CD8-positive, alpha-beta memory T cell (primary cell): ENCODE measurements at regions of chr12 and their contacts with region 1.

Region 1: DNA sequence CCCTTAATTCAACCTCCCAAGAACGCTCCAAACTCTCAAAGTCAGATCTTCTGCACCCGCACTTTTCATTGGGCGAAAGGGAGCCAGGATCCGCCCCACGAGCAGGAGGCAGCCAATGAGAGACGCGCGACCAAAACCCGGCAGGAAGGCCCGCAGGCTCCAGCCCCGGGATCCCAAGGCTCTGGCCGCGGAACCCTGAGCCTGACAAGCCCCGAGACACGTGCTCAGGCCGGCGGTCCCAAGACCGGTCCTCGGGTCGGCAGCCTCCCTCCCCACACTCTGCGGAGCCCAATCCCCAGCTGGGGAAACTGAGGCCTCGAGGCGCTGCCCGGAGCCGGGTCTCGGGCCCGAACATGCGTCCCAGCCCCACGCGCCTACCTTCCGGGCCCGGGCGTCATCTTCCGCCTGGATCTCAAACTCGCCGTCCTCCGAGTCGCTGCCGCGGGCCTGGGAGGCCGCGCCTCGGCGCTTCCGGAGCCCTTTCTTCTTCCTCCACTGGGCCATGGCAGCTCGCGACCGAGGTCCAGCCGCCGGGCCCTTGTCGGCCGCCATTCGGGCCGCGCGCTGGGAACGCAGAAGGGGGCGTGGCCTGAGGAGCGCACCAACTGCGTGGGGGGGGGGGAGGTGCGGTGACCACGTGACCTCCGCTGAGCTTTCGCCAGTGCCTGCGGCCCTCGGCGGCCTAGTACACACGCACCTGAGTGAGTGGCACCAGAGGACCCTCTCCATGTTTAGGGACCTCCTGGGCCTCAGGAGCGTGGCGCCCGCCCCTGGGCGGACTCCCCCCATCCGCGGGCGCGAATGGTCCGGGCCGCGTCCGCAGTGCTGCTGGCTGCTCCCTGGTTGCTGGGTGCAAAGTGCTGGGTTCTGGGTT is at the starts of genes DDX54 and RITA1:
- DNase-seq: peak; percentile 82 to 92 (median 89)
- H3K4me3 ChIP-seq: peak within 1 kb of the TSS; percentile 85
- H3K4me3 Mint-ChIP-seq: peak within 1 kb of the TSS; percentile 94 to 100 (median 96)
- H3K27ac ChIP-seq: peak within 1 kb of the TSS; percentile 89
- H3K27ac Mint-ChIP-seq: peak within 1 kb of the TSS; percentile 96 to 99 (median 97)
- H3K4me1 ChIP-seq: peaks cover 31% of the 10 kb centered on the region
- H3K4me1 Mint-ChIP-seq: peaks cover 28 to 51% (median 49%) of the 10 kb centered on the region in 3 donors
- H3K27me3 ChIP-seq: no peaks in the 10 kb centered on the region
- H3K27me3 Mint-ChIP-seq: no peaks in the 10 kb centered on the region
- total RNA-seq, gene DDX54: 131 to 133 TPM
- total RNA-seq, gene RITA1: 21.1 to 22.5 TPM

Region 2: GRCh38 chr12:113196996-113197395 is 11.9 kb after region 1 on chr12:
- CTCF ChIA-PET with region 1: interaction called, 19 read pairs
- POLR2A ChIA-PET with region 1: no interaction called
- DNase-seq: peak; percentile 20 to 75 (median 48)
- H3K4me3 ChIP-seq: no peak overlapping the region
- H3K4me3 Mint-ChIP-seq: no peak overlapping the region
- H3K27ac ChIP-seq: no peak overlapping the region
- H3K27ac Mint-ChIP-seq: no peak overlapping the region
- H3K4me1 ChIP-seq: no peaks in the 10 kb centered on the region
- H3K4me1 Mint-ChIP-seq: no peaks in the 10 kb centered on the region
- H3K27me3 ChIP-seq: no peaks in the 10 kb centered on the region
- H3K27me3 Mint-ChIP-seq: no peaks in the 10 kb centered on the region